Heart left ventricle (tissue), 16 donors: ENCODE measurements at regions of chr6 and their contacts with region 1.

Region 1: GRCh38 chr6:137218917-137219663 is at the start of gene IFNGR1:
- DNase-seq: peak; percentile 98 to 99 (median 99)
- ATAC-seq: peak; percentile 92 to 97 (median 96)
- H3K4me3 ChIP-seq: peak within 1 kb of the TSS; percentile 73 to 98 (median 84)
- H3K27ac ChIP-seq: peak within 1 kb of the TSS; percentile 96 to 100 (median 99)
- H3K4me1 ChIP-seq: peaks cover 11 to 87% (median 58%) of the 10 kb centered on the region in 12 donors
- H3K27me3 ChIP-seq: no peaks in the 10 kb centered on the region
- CTCF ChIP-seq: no peak
- POLR2A ChIP-seq: peak; percentile 89 to 98
- total RNA-seq, gene IFNGR1: 68.6 to 152 (median 79.2) TPM

Region 2: GRCh38 chr6:137025786-137026456 is 193.2 kb before region 1 on chr6:
- intact Hi-C with region 1: no loop called
- DNase-seq: no peak
- ATAC-seq: no peak
- H3K4me3 ChIP-seq: no peak overlapping the region
- H3K27ac ChIP-seq: no peak overlapping the region
- H3K4me1 ChIP-seq: no peaks in the 10 kb centered on the region
- H3K27me3 ChIP-seq: peaks cover 0 to 18% (median 0%) of the 10 kb centered on the region in 9 donors
- CTCF ChIP-seq: no peak
- POLR2A ChIP-seq: no peak

Region 3: GRCh38 chr6:137076277-137077068 is 142.6 kb before region 1 on chr6:
- intact Hi-C with region 1: no loop called
- DNase-seq: peak; percentile 64 to 80 (median 67)
- ATAC-seq: peak; percentile 95 to 100 (median 98)
- H3K4me3 ChIP-seq: no peak overlapping the region
- H3K27ac ChIP-seq: no peak overlapping the region
- H3K4me1 ChIP-seq: peaks cover 0 to 5% (median 0%) of the 10 kb centered on the region in 12 donors
- H3K27me3 ChIP-seq: no peaks in the 10 kb centered on the region
- CTCF ChIP-seq: peak; percentile 63 to 83 (median 72)
- POLR2A ChIP-seq: no peak

Region 4: GRCh38 chr6:137165375-137166246 is 53.5 kb before region 1 on chr6:
- intact Hi-C with region 1: no loop called
- DNase-seq: no peak
- ATAC-seq: no peak
- H3K4me3 ChIP-seq: no peak overlapping the region
- H3K27ac ChIP-seq: peak overlapping the region in 1 of 12 donors; percentile 37
- H3K4me1 ChIP-seq: peaks cover 0 to 56% (median 0%) of the 10 kb centered on the region in 12 donors
- H3K27me3 ChIP-seq: no peaks in the 10 kb centered on the region
- CTCF ChIP-seq: peak in 4 of 12 donors; percentile 19 to 44 (median 28)
- POLR2A ChIP-seq: no peak

Region 5: GRCh38 chr6:137233911-137234863 is 15.1 kb after region 1 on chr6:
- intact Hi-C with region 1: loop called in 1 of 10 experiments (anchors 2 kb)
- DNase-seq: peak in 4 of 5 donors; percentile 42 to 62 (median 52)
- ATAC-seq: peak; percentile 25 to 85 (median 68)
- H3K4me3 ChIP-seq: no peak overlapping the region
- H3K27ac ChIP-seq: peak overlapping the region; percentile 35 to 94 (median 73)
- H3K4me1 ChIP-seq: peaks cover 8 to 99% (median 35%) of the 10 kb centered on the region in 12 donors
- H3K27me3 ChIP-seq: no peaks in the 10 kb centered on the region
- CTCF ChIP-seq: no peak
- POLR2A ChIP-seq: no peak

Region 6: GRCh38 chr6:137261393-137262160 is 42.5 kb after region 1 on chr6:
- intact Hi-C with region 1: loop called in 3 of 10 experiments (anchors 5 kb)
- DNase-seq: no peak
- ATAC-seq: peak; percentile 36 to 71 (median 58)
- H3K4me3 ChIP-seq: no peak overlapping the region
- H3K27ac ChIP-seq: peak overlapping the region; percentile 32 to 72 (median 49)
- H3K4me1 ChIP-seq: peaks cover 0 to 31% (median 8%) of the 10 kb centered on the region in 12 donors
- H3K27me3 ChIP-seq: no peaks in the 10 kb centered on the region
- CTCF ChIP-seq: no peak
- POLR2A ChIP-seq: no peak

Region 7: DNA sequence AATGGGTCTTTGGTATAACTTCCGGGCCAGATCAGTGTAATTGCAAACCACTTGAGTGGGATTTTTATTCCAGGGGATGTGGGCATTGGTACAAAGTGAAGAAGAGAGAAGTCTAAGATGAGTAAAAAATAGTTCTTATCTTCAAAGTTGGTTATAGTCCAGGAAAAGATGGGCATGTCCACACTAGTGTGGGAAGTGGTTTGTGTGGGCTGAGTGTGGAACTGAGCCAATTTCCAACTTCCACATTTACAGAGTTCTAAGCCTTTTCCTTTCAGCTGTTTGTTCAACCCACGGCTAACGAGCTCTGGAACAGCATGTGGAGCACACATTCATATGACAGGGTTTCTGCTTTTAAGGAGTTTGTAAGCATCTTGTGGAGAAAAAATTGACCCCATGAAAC is 72.4 kb after region 1 on chr6:
- intact Hi-C with region 1: no loop called
- DNase-seq: peak in 4 of 5 donors; percentile 33 to 66 (median 52)
- ATAC-seq: peak; percentile 67 to 84 (median 78)
- H3K4me3 ChIP-seq: no peak overlapping the region
- H3K27ac ChIP-seq: peak overlapping the region in 1 of 12 donors; percentile 61
- H3K4me1 ChIP-seq: peaks cover 0 to 24% (median 0%) of the 10 kb centered on the region in 12 donors
- H3K27me3 ChIP-seq: no peaks in the 10 kb centered on the region
- CTCF ChIP-seq: no peak
- POLR2A ChIP-seq: no peak